ENCODE measurements at regions of chr6 and their contacts with region 1.

Region 1: DNA sequence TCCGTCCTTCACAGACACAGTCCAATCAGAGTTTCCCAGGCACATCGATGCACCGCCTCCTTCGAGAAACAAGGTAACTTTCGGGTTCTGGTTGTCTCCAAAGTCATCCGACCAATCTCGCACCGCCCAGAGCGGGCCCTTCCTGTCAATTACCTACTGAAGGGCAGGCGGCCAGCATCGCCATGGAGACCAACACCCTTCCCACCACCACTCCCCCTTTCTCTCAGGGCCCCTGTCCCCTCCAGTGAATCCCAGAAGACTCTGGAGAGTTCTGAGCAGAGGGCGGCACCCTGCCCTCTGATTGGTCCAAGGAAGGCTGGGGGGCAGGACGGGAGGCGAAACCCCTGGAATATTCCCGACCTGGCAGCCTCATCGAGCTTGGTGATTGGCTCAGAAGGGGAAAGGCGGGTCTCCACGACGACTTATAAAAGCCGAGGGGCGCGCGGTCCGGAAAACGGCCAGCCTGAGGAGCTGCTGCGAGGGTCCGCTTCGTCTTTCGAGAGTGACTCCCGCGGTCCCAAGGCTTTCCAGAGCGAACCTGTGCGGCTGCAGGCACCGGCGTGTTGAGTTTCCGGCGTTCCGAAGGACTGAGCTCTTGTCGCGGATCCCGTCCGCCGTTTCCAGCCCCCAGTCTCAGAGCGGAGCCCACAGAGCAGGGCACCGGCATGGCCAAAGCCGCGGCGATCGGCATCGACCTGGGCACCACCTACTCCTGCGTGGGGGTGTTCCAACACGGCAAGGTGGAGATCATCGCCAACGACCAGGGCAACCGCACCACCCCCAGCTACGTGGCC is at the start of gene HSPA1B:
- DNase-seq: peak; percentile 97
- ATAC-seq: peak; percentile 86
- H3K4me3 ChIP-seq: peak within 1 kb of the TSS; percentile 78
- H3K27ac ChIP-seq: peak within 1 kb of the TSS; percentile 87
- H3K4me1 ChIP-seq: peaks cover 12% of the 10 kb centered on the region
- H3K27me3 ChIP-seq: no peaks in the 10 kb centered on the region
- CTCF ChIP-seq: no peak
- EP300 ChIP-seq: peak in 1 of 2 experiments; percentile 86; a peak in 2 of 4 replicates
- POLR2A ChIP-seq: peak; percentile 95
- RAD21 ChIP-seq: no peak
- polyA plus RNA-seq, gene HSPA1B: 0.11 to 0.33 TPM

Region 2: GRCh38 chr6:31546962-31547726 is 280.3 kb before region 1 on chr6 and contains the start of gene NFKBIL1:
- CTCF ChIA-PET with region 1: interaction called, 22 read pairs
- POLR2A ChIA-PET with region 1: interaction called, 9 read pairs
- RAD21 ChIA-PET with region 1: interaction called, 11 read pairs
- SMC1A ChIA-PET with region 1: interaction called, 12 read pairs
- in situ Hi-C with region 1: loop called (anchors 10 kb)
- intact Hi-C with region 1: loop called (anchors 1 kb)
- DNase-seq: peak; percentile 89
- ATAC-seq: peak; percentile 88
- H3K4me3 ChIP-seq: peak within 1 kb of the TSS; percentile 72
- H3K27ac ChIP-seq: peak within 1 kb of the TSS; percentile 64
- H3K4me1 ChIP-seq: peaks cover 23% of the 10 kb centered on the region; the same call in 1 of the 2 replicates
- H3K27me3 ChIP-seq: no peaks in the 10 kb centered on the region
- CTCF ChIP-seq: no peak
- EP300 ChIP-seq: 0 out of 4 replicates have a peak, but pooled peaks of 1 of the 2 experiments have one; percentile 20
- POLR2A ChIP-seq: peak; percentile 69
- RAD21 ChIP-seq: no peak
- polyA plus RNA-seq, gene NFKBIL1: 0.19 to 0.64 TPM

Region 3: GRCh38 chr6:31702819-31703522 is 124.5 kb before region 1 on chr6 and contains the start of gene ABHD16A:
- CTCF ChIA-PET with region 1: no interaction called
- POLR2A ChIA-PET with region 1: interaction called, 11 read pairs
- RAD21 ChIA-PET with region 1: interaction called, 5 read pairs
- SMC1A ChIA-PET with region 1: interaction called, 4 read pairs
- in situ Hi-C with region 1: no loop called
- intact Hi-C with region 1: no loop called
- DNase-seq: peak; percentile 95
- ATAC-seq: peak; percentile 96
- H3K4me3 ChIP-seq: peak within 1 kb of the TSS; percentile 96
- H3K27ac ChIP-seq: peak within 1 kb of the TSS; percentile 91
- H3K4me1 ChIP-seq: peaks cover 9% of the 10 kb centered on the region; the same call in 1 of the 2 replicates
- H3K27me3 ChIP-seq: no peaks in the 10 kb centered on the region
- CTCF ChIP-seq: 0 out of 6 replicates have a peak, but pooled peaks of 1 of the 3 experiments have one; percentile 11
- EP300 ChIP-seq: no peak
- POLR2A ChIP-seq: peak; percentile 88
- RAD21 ChIP-seq: no peak
- polyA plus RNA-seq, gene ABHD16A: 7.5 to 14.5 TPM

Region 4: GRCh38 chr6:31769684-31770371 is 57.7 kb before region 1 on chr6:
- CTCF ChIA-PET with region 1: interaction called, 27 read pairs
- POLR2A ChIA-PET with region 1: interaction called, 6 read pairs
- RAD21 ChIA-PET with region 1: interaction called, 18 read pairs
- SMC1A ChIA-PET with region 1: interaction called, 18 read pairs
- in situ Hi-C with region 1: no loop called
- intact Hi-C with region 1: loop called (anchors 10 kb)
- DNase-seq: peak; percentile 36
- ATAC-seq: peak; percentile 97
- H3K4me3 ChIP-seq: no peak overlapping the region
- H3K27ac ChIP-seq: no peak overlapping the region
- H3K4me1 ChIP-seq: no peaks in the 10 kb centered on the region
- H3K27me3 ChIP-seq: no peaks in the 10 kb centered on the region
- CTCF ChIP-seq: peak; percentile 91 to 95 (median 91)
- EP300 ChIP-seq: no peak
- POLR2A ChIP-seq: no peak
- RAD21 ChIP-seq: peak; percentile 72

Region 5: GRCh38 chr6:31806465-31807272 is 20.8 kb before region 1 on chr6 and contains the start of gene LSM2:
- CTCF ChIA-PET with region 1: interaction called, 9 read pairs
- POLR2A ChIA-PET with region 1: interaction called, 91 read pairs
- RAD21 ChIA-PET with region 1: interaction called, 17 read pairs
- SMC1A ChIA-PET with region 1: interaction called, 22 read pairs
- in situ Hi-C with region 1: no loop called
- intact Hi-C with region 1: no loop called
- DNase-seq: peak; percentile 74
- ATAC-seq: peak; percentile 98
- H3K4me3 ChIP-seq: peak within 1 kb of the TSS; percentile 92
- H3K27ac ChIP-seq: peak within 1 kb of the TSS; percentile 81
- H3K4me1 ChIP-seq: peaks cover 5% of the 10 kb centered on the region
- H3K27me3 ChIP-seq: no peaks in the 10 kb centered on the region
- CTCF ChIP-seq: peak; percentile 24 to 34 (median 24); a peak in 3 of 6 replicates
- EP300 ChIP-seq: no peak
- POLR2A ChIP-seq: peak; percentile 92
- RAD21 ChIP-seq: no peak
- polyA plus RNA-seq, gene LSM2: 245 to 248 TPM

Region 6: DNA sequence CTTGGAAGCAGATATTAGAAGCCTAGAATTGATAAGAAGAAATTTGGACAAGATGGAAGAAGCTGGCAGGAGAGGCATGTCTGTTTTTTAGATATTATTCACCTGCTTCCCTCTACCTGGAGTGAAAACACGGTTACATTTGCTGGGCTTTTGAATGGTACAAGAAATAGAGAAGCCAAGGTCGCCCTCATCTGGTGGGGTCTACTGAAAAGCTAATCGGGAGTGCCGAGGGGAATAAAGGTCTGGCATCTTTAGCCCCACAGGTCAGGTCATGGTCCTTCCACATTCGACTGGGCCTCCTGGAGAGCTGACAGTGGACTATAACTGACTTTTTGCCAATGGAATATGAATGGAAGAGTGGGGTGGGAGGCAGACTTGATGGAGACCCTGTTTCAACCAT is 95.5 kb after region 1 on chr6:
- CTCF ChIA-PET with region 1: interaction called, 16 read pairs
- POLR2A ChIA-PET with region 1: no interaction called
- RAD21 ChIA-PET with region 1: interaction called, 20 read pairs
- SMC1A ChIA-PET with region 1: interaction called, 7 read pairs
- in situ Hi-C with region 1: no loop called
- intact Hi-C with region 1: no loop called
- DNase-seq: no peak
- ATAC-seq: peak; percentile 90
- H3K4me3 ChIP-seq: no peak overlapping the region
- H3K27ac ChIP-seq: no peak overlapping the region
- H3K4me1 ChIP-seq: no peaks in the 10 kb centered on the region
- H3K27me3 ChIP-seq: no peaks in the 10 kb centered on the region
- CTCF ChIP-seq: peak; percentile 57 to 65 (median 61)
- EP300 ChIP-seq: no peak
- POLR2A ChIP-seq: no peak
- RAD21 ChIP-seq: peak; percentile 79

Region 7: DNA sequence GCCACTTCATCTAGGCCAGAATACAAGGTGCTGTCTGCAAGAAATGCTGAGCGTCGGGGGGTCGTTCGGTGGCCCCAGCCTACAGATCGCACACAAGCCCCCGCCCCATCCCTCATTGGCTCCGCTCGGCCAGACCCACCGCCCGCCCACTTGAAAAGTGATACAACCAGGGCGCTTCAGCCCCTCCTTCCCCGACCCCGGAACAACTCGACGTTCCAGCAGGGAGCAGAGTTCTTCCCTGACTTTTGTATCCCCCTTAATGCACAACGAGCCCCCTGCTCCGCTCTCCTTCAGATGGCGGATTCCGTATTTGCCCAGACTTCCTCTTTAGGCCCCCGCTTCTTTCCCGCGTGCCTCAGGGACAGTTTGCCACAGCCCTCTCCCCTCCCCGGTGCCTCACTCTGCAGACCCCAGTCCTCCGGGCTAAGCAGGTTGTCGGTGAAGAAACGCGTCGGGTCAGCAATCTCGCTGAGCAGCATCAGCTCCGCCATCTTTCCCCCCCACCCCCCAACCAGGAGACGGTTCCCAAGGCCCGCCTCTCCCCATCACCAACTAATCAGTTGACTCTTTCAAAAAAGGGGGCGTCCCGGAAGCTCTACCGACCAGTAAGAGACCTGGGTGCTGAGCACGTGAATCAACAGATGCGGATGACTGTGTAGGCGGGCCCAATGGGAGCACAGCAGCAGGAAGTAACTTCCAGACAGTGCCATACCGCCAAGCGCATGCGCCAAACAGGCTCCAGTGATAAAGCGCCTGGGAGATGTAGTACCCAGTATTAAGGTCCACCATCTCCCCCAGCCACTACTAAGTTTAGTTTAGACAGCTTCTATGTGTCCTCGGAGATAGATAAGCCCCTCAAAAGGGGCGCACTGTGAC is 300.5 kb after region 1 on chr6 and contains the start of gene ATF6B:
- CTCF ChIA-PET with region 1: no interaction called
- POLR2A ChIA-PET with region 1: no interaction called
- RAD21 ChIA-PET with region 1: no interaction called
- SMC1A ChIA-PET with region 1: no interaction called
- in situ Hi-C with region 1: no loop called
- intact Hi-C with region 1: no loop called
- DNase-seq: peak; percentile 97
- ATAC-seq: peak; percentile 95
- H3K4me3 ChIP-seq: peak within 1 kb of the TSS; percentile 88
- H3K27ac ChIP-seq: peak within 1 kb of the TSS; percentile 95
- H3K4me1 ChIP-seq: peaks cover 13% of the 10 kb centered on the region
- H3K27me3 ChIP-seq: no peaks in the 10 kb centered on the region
- CTCF ChIP-seq: no peak
- EP300 ChIP-seq: no peak
- POLR2A ChIP-seq: peak; percentile 91
- RAD21 ChIP-seq: no peak
- polyA plus RNA-seq, gene ATF6B: 13.6 to 16.0 TPM

Region 8: GRCh38 chr6:32166411-32167061 is 339.1 kb after region 1 on chr6:
- CTCF ChIA-PET with region 1: no interaction called
- POLR2A ChIA-PET with region 1: no interaction called
- RAD21 ChIA-PET with region 1: no interaction called
- SMC1A ChIA-PET with region 1: no interaction called
- in situ Hi-C with region 1: no loop called
- intact Hi-C with region 1: no loop called
- DNase-seq: no peak
- ATAC-seq: no peak
- H3K4me3 ChIP-seq: no peak overlapping the region
- H3K27ac ChIP-seq: no peak overlapping the region
- H3K4me1 ChIP-seq: no peaks in the 10 kb centered on the region
- H3K27me3 ChIP-seq: no peaks in the 10 kb centered on the region
- CTCF ChIP-seq: no peak
- EP300 ChIP-seq: no peak
- POLR2A ChIP-seq: no peak
- RAD21 ChIP-seq: no peak

Measured in GM12878 (cell line).